Activated CD8-positive, alpha-beta T cell treated with anti-CD3 and anti-CD28 coated beads for 36 hours (primary cell): ENCODE measurements at regions of chr15 and their contacts with region 1.

Region 1: DNA sequence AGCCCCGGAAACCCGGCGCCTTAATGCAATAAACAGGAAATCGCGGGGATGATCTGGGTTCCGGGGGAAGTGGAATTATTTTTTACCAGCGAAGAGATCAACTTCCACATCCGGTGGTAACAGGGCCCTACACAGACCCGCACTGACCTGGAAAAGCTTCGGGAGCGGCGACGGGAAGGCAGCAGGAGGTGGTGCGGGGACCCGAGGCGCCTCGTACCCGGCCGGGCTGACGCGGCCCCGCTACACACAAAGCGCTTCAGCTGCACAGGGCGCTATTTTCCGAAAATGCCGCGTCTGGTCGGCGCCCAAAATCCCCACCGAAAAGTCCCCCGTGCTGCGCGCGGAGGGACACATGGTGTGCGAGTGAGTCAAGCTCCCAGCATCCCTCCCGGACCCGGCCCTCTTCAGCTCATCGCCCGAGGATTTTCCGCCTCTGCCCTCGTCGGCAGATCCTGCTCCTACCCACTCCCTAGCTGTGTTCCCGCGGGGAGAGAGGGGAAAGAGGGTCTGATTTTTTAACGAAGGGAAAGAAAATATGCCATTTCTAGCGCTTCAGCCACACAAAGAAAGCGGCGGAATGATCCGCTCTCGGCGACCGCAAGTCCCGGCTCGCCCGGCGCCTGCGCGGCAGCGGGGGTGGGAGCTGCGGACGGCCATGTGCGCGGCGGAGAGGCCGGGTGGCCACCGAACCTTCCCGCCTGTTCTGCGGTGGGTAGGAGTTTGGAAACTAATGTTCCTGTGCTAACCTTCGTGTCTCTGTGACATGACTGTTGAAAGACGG is at the start of gene GABPB1:
- DNase-seq: peak; percentile 90
- ATAC-seq: peak; percentile 46
- H3K4me3 Mint-ChIP-seq: peak within 1 kb of the TSS; percentile 90
- H3K27ac Mint-ChIP-seq: peak within 1 kb of the TSS; percentile 95
- H3K4me1 Mint-ChIP-seq: peaks cover 33% of the 10 kb centered on the region
- H3K27me3 Mint-ChIP-seq: no peaks in the 10 kb centered on the region
- CTCF ChIP-seq: no peak
- total RNA-seq, gene GABPB1: 33.2 to 36.2 TPM

Region 2: DNA sequence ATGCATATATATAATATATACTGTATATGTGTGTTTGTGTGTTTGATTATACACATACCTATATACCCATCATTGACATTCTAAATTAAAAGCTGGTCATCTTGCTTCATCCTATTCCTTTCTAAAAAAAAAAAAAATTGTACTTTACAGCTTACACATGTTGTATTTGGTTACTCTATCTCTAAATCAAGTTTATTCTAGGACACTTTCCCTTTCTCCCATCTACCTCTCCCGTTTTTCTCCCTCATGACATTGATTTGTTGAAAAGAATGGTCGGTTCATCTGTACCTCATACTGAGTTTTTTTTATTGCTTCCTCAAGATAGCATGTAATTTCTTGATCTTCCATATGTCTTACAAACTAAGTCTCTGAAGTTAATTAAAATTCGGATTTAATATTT is 26.9 kb before region 1 on chr15:
- CTCF ChIA-PET with region 1: no interaction called
- POLR2A ChIA-PET with region 1: no interaction called
- intact Hi-C with region 1: no loop called
- DNase-seq: no peak
- ATAC-seq: no peak
- H3K4me3 Mint-ChIP-seq: no peak overlapping the region
- H3K27ac Mint-ChIP-seq: no peak overlapping the region
- H3K4me1 Mint-ChIP-seq: peaks cover 10% of the 10 kb centered on the region
- H3K27me3 Mint-ChIP-seq: no peaks in the 10 kb centered on the region
- CTCF ChIP-seq: no peak

Region 3: GRCh38 chr15:50340416-50340815 is 14.6 kb before region 1 on chr15:
- CTCF ChIA-PET with region 1: interaction called, 4 read pairs
- POLR2A ChIA-PET with region 1: interaction called, 16 read pairs
- intact Hi-C with region 1: no loop called
- DNase-seq: no peak
- ATAC-seq: no peak
- H3K4me3 Mint-ChIP-seq: no peak overlapping the region
- H3K27ac Mint-ChIP-seq: no peak overlapping the region
- H3K4me1 Mint-ChIP-seq: peaks cover 11% of the 10 kb centered on the region
- H3K27me3 Mint-ChIP-seq: no peaks in the 10 kb centered on the region
- CTCF ChIP-seq: no peak

Region 4: DNA sequence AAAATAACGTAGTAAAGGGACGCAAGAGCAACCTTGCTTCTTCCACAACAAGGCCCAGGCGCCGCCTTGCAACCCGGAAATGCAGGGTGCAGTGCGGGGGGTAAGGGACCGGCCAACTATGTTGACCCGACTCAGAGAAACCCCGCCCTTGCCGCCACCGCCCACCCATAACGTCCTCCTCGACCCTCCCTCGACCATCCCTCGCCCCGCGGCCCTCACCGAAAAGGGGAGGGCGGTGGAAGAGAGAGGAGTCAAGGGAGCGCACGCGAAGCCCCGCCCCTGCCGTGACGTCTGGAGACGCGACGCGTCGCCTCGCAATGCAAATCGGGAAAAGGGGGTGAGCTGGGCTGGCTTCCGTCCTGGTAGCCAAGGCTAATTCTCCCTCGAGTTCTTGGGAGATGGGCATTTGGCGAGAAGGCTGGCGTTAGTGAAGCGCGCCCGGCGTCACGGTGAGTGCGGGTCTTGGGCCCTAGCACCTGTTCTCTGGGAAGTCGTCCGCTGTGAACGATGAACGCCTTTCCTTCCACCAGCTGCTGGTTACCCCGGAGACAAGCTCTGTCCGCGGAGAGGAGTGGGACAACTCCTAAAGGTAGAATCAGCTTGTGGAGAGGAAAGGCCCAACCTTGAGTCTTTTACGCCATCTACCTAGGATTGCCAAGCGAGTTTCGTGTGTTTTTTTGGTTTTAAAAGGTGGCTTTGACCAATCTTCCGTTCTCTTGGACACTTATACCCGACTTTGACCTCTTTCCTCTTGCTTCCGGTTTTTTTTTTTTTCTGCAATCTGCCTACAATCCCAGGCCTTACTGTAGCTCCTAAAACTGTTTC is 69.2 kb after region 1 on chr15 and contains the start of gene USP8:
- CTCF ChIA-PET with region 1: interaction called, 7 read pairs
- POLR2A ChIA-PET with region 1: interaction called, 50 read pairs
- intact Hi-C with region 1: loop called (anchors 1 kb)
- DNase-seq: peak; percentile 98
- ATAC-seq: peak; percentile 99
- H3K4me3 Mint-ChIP-seq: peak within 1 kb of the TSS; percentile 99
- H3K27ac Mint-ChIP-seq: peak within 1 kb of the TSS; percentile 93
- H3K4me1 Mint-ChIP-seq: peaks cover 30% of the 10 kb centered on the region
- H3K27me3 Mint-ChIP-seq: no peaks in the 10 kb centered on the region
- CTCF ChIP-seq: no peak
- total RNA-seq, gene USP8: 39.7 to 43.7 TPM

Region 5: GRCh38 chr15:50506121-50506520 is 151.1 kb after region 1 on chr15:
- CTCF ChIA-PET with region 1: no interaction called
- POLR2A ChIA-PET with region 1: no interaction called
- intact Hi-C with region 1: no loop called
- DNase-seq: no peak
- ATAC-seq: no peak
- H3K4me3 Mint-ChIP-seq: no peak overlapping the region
- H3K27ac Mint-ChIP-seq: no peak overlapping the region
- H3K4me1 Mint-ChIP-seq: no peaks in the 10 kb centered on the region
- H3K27me3 Mint-ChIP-seq: no peaks in the 10 kb centered on the region
- CTCF ChIP-seq: no peak

Region 6: DNA sequence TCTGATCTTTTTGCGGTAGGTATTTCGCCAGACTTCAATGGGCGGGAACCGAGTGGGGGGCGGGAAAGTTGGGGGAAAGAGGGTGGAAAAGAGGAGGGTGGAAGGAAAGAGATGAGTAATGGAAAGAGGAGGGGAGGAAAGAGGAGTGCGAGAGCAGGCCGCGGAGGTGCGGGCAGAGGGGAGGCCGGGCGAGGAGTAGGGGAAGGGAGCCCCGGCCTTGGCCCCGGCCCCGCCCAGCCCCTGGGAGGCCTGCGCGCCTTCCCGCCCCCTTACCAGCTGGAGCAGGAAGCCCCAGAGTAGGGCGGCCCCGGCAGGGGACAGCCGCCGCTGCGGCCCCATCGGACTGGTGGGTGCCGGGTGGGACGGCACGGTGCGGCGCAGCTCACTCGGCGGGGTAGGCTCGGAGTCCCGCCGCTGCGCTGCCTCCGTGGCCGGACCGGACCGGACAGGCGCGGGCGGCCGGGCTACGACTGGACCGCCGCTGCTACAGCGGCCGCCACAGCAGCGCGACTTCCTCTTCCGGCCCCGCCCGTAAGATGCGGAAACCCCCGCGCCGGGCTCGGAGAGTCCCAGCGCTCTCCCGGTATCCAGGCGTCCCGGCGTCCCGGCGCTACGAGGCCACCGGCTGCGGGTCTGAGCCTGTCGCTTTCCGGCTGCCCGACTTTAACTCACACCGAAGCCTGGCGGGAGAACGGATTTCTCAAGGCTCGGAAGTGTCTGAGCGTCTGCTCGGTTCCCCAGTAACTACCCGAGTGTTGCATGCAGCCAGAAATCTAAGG is 410.4 kb after region 1 on chr15 and contains the start of gene SPPL2A:
- CTCF ChIA-PET with region 1: no interaction called
- POLR2A ChIA-PET with region 1: interaction called, 4 read pairs
- intact Hi-C with region 1: loop called (anchors 10 kb)
- DNase-seq: peak; percentile 93
- ATAC-seq: peak; percentile 90
- H3K4me3 Mint-ChIP-seq: peak within 1 kb of the TSS; percentile 88
- H3K27ac Mint-ChIP-seq: peak within 1 kb of the TSS; percentile 99
- H3K4me1 Mint-ChIP-seq: peaks cover 54% of the 10 kb centered on the region
- H3K27me3 Mint-ChIP-seq: no peaks in the 10 kb centered on the region
- CTCF ChIP-seq: no peak
- total RNA-seq, gene SPPL2A: 47.7 to 48.8 TPM